ENCODE measurements at regions of chr14 and their contacts with region 1.

Region 1: DNA sequence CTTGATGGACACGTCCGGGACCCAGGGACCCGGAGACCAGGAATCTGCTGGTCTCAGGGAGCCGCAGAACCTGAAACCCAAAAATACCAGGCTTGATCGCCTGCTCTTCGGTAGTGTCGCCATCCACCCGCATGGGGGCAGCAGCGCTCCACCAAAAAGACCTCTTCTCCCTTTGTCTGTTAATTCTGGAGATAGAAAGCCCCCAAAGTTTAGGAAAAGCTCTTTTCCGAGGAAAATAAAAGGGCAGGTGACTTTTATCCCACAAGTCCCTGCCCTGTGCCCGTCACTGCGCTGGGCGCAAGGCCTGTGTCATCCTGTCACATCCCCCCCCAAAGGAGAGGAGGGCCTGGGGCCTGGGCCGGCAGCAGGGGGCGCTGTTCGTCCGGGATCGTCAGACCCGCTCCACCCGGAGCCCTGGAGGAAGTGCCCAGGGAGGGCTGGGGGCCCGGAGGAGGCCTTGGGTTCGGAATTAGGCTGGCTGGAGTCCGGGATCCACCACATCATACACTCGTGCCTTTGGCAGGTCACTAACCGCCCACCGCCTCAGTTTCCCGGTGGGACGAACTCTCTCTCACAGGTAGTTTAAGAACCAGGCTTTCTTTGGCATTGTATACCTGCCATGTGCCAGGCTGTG is 31.9 kb downstream of the DAD1 start:
- DNase-seq: peak; percentile 78 to 99 (median 94)
- ATAC-seq: peak; percentile 10 to 20
- H3K4me3 Mint-ChIP-seq: peak overlapping the region; percentile 61 to 97 (median 80)
- H3K27ac Mint-ChIP-seq: peak overlapping the region; percentile 96 to 100 (median 99)
- H3K4me1 Mint-ChIP-seq: peaks cover 50 to 95% (median 90%) of the 10 kb centered on the region in 4 donors
- H3K27me3 Mint-ChIP-seq: peaks cover 0 to 4% (median 0%) of the 10 kb centered on the region in 5 donors

Region 2: GRCh38 chr14:21852061-21852664 is 704.9 kb before region 1 on chr14:
- POLR2A ChIA-PET with region 1: interaction called, 10 read pairs
- DNase-seq: peak; percentile 50 to 80 (median 61)
- ATAC-seq: peak; percentile 78 to 85
- H3K4me3 Mint-ChIP-seq: peak overlapping the region; percentile 30 to 90 (median 83)
- H3K27ac Mint-ChIP-seq: peak overlapping the region in 9 of 10 donors; percentile 47 to 91 (median 79)
- H3K4me1 Mint-ChIP-seq: peaks cover 2 to 13% (median 10%) of the 10 kb centered on the region in 4 donors
- H3K27me3 Mint-ChIP-seq: peaks cover 1 to 23% (median 7%) of the 10 kb centered on the region in 5 donors

Region 3: GRCh38 chr14:22070119-22071011 is 486.7 kb before region 1 on chr14:
- POLR2A ChIA-PET with region 1: interaction called, 12 read pairs
- DNase-seq: peak; percentile 21 to 74 (median 47)
- ATAC-seq: peak; percentile 78 to 81
- H3K4me3 Mint-ChIP-seq: peak overlapping the region; percentile 90 to 96 (median 94)
- H3K27ac Mint-ChIP-seq: peak overlapping the region; percentile 82 to 97 (median 94)
- H3K4me1 Mint-ChIP-seq: peaks cover 4 to 61% (median 49%) of the 10 kb centered on the region in 4 donors
- H3K27me3 Mint-ChIP-seq: peaks cover 0 to 9% (median 0%) of the 10 kb centered on the region in 5 donors

Region 4: DNA sequence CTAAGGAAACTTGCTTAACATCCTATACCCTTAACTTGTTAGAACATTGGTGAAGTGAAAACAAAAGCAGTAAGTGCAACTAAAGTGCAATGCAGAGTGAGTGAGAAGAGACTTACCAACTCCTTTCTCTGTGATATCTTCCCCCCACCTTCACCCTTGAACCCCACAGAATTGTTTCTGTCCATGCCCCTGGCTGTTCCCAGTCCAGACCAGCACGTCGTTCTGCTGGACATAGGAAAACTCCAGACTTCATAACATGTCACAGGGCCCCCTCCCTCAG is 60.0 kb before region 1 on chr14:
- POLR2A ChIA-PET with region 1: interaction called, 760 read pairs
- DNase-seq: no peak
- ATAC-seq: peak; percentile 26 to 35
- H3K4me3 Mint-ChIP-seq: peak overlapping the region; percentile 78 to 93 (median 88)
- H3K27ac Mint-ChIP-seq: peak overlapping the region in 9 of 10 donors; percentile 88 to 98 (median 92)
- H3K4me1 Mint-ChIP-seq: peaks cover 4 to 64% (median 26%) of the 10 kb centered on the region in 4 donors
- H3K27me3 Mint-ChIP-seq: no peaks in the 10 kb centered on the region

Region 5: GRCh38 chr14:22531451-22532344 is 25.4 kb before region 1 on chr14:
- POLR2A ChIA-PET with region 1: interaction called, 879 read pairs
- DNase-seq: peak in 2 of 10 donors; percentile 55 to 58
- ATAC-seq: peak; percentile 53 to 69
- H3K4me3 Mint-ChIP-seq: peak overlapping the region; percentile 75 to 91 (median 88)
- H3K27ac Mint-ChIP-seq: peak overlapping the region; percentile 76 to 99 (median 96)
- H3K4me1 Mint-ChIP-seq: peaks cover 44 to 92% (median 89%) of the 10 kb centered on the region in 4 donors
- H3K27me3 Mint-ChIP-seq: no peaks in the 10 kb centered on the region

Region 6: DNA sequence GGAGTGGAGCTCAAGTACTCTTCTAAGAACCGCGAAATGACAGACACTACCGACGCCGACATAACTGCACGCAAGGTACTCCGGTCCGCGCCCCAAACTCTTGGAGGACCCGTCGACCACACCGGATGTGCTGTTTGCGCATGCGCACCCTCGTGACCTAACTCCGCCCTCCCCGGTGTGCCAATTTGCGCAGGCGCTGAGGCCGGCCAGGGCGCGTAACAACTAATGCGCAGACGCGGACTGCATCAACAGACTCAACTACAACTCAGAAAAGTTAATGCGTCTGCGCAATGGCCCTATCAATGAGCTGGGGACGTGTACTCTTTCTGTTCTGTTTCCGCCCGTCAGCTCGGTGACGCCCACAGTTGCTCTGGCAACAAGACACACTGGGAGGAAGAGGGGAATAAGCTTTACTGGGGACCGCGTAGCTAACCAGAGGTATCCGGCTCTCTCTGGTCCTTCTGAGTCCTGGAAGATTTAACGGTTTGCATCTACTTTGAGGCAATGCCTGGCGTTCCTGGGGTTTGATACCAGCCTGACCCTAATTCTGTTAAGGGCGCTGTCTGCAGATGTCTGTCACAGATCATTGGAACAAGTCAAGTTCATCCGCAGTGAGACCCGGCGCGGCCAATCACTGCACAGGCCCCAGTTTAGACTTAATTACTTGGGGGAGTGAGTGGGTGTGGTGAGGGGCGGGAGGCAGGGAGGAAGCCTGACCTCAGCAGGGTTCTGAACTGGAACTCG is 32.2 kb after region 1 on chr14 and contains the start of gene DAD1:
- POLR2A ChIA-PET with region 1: interaction called, 36 read pairs
- DNase-seq: peak; percentile 98 to 100 (median 100)
- ATAC-seq: peak; percentile 88 to 93
- H3K4me3 Mint-ChIP-seq: peak within 1 kb of the TSS; percentile 90 to 99 (median 98)
- H3K27ac Mint-ChIP-seq: peak within 1 kb of the TSS; percentile 95 to 100 (median 99)
- H3K4me1 Mint-ChIP-seq: peaks cover 34 to 60% (median 55%) of the 10 kb centered on the region in 4 donors
- H3K27me3 Mint-ChIP-seq: peaks cover 0 to 5% (median 0%) of the 10 kb centered on the region in 5 donors
- polyA plus RNA-seq, gene DAD1: 610 to 660 (median 642) TPM

Measured in naive thymus-derived CD8-positive, alpha-beta T cell (primary cell).